Stomach (tissue), 19 donors: ENCODE measurements at regions of chr1 and their contacts with region 1.

Region 1: DNA sequence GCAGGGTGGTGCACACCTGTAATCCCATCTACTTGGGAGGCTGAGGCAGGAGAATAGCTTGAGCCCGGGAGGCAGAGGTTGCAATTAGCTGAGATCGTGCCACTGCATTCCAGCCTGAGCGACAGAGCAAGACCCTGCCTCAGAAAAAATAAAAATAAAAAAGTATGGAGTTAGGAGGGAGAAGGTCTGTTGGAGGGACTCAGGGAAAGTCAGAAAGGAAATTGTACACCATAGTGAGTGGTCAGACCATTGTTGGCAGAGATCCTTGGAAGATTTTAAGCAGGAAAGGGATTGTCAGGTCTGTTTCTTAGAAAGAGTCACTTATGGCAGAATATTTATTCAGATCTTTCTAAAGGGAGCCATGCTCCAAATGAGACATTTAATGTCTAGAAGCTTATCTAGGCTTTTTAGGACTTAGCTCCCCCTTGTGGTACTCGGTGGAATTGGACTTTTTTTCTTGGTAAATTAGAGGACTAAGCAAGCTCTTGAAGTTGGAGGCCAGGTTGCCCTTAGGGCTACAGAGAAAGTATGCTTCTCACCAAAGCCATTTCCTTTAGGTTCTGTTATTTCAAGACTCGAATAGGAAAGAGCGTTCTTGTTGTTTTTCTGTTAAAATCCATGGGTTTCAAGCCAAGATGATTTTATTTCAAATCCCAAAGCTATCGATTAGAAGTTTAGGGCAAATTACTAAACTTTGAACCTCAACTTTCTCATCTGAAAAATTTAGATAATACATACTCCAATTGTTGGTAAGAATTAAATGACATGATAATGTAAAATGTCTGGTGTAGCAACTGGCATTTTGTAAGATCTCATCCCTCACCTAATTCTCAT is 16.5 kb downstream of the MIA3 start:
- DNase-seq: peak; percentile 67 to 92
- H3K4me3 ChIP-seq: no peak overlapping the region
- H3K27ac ChIP-seq: no peak overlapping the region
- H3K4me1 ChIP-seq: peaks cover 0 to 6% (median 3%) of the 10 kb centered on the region in 4 donors
- H3K27me3 ChIP-seq: no peaks in the 10 kb centered on the region
- CTCF ChIP-seq: peak in 5 of 7 experiments; percentile 72 to 93 (median 85)
- EP300 ChIP-seq: no peak
- POLR2A ChIP-seq: no peak

Region 2: DNA sequence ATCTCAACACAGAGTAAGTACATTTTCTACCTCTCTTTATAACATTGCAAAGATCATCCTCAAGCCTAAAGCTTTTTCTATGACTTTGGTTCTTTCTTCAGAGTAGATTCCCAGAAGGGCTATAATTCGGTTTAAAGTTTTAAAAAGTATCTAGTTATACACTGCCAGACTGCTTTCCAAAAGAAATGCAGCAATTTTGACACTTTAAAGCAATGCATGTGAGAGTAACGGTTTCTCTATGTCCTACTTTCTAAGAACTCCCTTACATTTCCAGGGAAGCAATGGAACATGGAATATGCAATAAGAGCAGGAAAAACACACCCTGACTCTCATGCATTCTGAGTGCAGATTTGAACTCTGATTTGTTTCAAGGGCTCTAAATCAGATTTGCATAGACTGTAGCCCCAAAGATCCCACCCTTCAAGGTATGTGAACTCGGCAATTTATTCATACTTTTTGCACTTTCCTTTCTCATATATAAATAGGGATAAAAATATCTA is 418.1 kb before region 1 on chr1:
- intact Hi-C with region 1: no loop called
- DNase-seq: no peak
- H3K4me3 ChIP-seq: no peak overlapping the region
- H3K27ac ChIP-seq: no peak overlapping the region
- H3K4me1 ChIP-seq: no peaks in the 10 kb centered on the region
- H3K27me3 ChIP-seq: no peaks in the 10 kb centered on the region
- CTCF ChIP-seq: no peak
- EP300 ChIP-seq: no peak
- POLR2A ChIP-seq: no peak

Region 3: DNA sequence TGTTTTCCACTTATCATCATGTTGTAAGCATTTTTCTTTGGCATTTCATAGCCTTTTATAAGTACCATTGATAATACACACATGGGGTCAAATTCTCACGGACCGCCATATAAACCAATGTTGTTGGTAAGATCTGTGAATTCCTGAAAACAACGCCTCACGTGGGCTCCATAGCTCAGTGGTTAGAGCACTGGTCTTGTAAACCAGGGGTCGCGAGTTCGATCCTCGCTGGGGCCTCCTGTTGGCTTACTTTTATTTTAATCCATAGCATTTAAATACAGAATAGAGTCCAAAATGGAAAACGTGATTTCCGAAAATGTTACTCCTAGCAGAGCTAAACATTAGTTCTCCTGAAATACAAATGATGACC is 169.6 kb before region 1 on chr1:
- intact Hi-C with region 1: loop called (anchors 5 kb)
- DNase-seq: peak; percentile 36 to 76
- H3K4me3 ChIP-seq: peak overlapping the region; percentile 35 to 48 (median 40)
- H3K27ac ChIP-seq: peak overlapping the region; percentile 79 to 90 (median 88)
- H3K4me1 ChIP-seq: peaks cover 5 to 17% (median 12%) of the 10 kb centered on the region in 4 donors
- H3K27me3 ChIP-seq: no peaks in the 10 kb centered on the region
- CTCF ChIP-seq: no peak
- EP300 ChIP-seq: no peak
- POLR2A ChIP-seq: no peak